OCI-LY7 (cell line): ENCODE measurements at regions of chr11 and their contacts with region 1.

Region 1: DNA sequence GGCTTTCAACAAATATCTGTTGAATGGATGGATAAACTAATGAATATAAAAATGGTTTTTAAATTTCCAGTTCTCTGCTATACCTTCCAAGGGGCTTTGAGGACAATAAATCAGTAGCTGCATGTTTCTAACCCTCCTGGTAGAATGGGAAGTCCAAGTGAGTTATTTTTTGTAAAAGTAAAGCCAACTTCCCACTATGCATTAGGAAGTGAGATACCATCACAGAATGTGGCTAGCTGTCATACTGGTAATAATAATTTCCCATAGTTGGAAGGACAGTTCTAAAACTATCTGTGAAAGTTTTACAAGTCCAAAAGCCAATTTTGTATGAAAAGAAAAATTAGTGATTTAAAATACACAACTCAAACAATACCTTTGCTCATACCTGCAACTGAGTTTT is 50.0 kb downstream of the TMEM123 start:
- DNase-seq: no peak
- H3K4me3 ChIP-seq: no peak overlapping the region
- H3K27ac ChIP-seq: peak overlapping the region; percentile 1
- H3K4me1 ChIP-seq: peaks cover 24% of the 10 kb centered on the region
- CTCF ChIP-seq: no peak

Region 2: DNA sequence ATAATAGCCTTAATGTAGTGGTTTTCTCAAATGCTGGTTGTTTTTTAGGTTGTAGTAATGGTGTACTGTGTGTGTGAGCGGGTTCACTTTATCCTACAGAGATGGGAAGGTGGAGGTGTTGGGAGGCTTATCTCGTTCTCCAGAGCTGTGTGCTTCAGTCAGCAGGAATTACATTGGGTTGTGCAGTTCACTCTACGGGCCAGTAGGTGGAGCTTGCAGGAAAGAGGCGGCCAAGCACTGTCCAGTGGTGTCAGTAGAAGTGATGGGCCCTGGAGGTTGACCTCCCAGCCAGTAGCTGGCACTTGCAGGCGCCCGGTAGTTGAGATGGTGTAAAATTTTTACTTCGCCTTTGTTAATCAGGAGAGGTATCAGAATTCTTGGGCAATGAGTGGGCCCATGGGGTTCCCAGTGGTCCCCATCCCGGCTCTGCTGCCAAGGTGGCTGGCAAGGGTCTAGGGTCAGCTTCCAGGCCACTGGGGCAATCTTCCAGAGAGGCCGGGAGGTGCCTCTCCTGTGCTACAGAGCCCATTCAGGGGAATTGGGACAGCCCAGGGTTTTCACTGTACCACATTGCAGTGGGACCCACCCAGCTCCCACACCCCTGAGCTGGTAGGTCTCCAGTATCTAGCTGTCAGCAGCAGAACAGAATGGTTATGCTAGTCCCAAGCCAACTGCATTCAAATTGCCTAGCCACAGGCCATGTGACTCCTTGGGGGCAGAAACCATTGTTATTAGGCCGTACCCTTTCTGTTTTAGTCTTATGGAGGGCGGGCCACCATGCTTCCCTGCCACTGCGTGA is 11.7 kb before region 1 on chr11:
- CTCF ChIA-PET with region 1: interaction called, 4 read pairs
- POLR2A ChIA-PET with region 1: interaction called, 11 read pairs
- intact Hi-C with region 1: no loop called
- DNase-seq: peak; percentile 74
- H3K4me3 ChIP-seq: no peak overlapping the region
- H3K27ac ChIP-seq: no peak overlapping the region
- H3K4me1 ChIP-seq: peaks cover 28% of the 10 kb centered on the region
- CTCF ChIP-seq: peak; percentile 95

Region 3: GRCh38 chr11:102469172-102469821 is 66.7 kb after region 1 on chr11:
- CTCF ChIA-PET with region 1: no interaction called
- POLR2A ChIA-PET with region 1: no interaction called
- intact Hi-C with region 1: no loop called
- DNase-seq: no peak
- H3K4me3 ChIP-seq: no peak overlapping the region
- H3K27ac ChIP-seq: no peak overlapping the region
- H3K4me1 ChIP-seq: peaks cover 82% of the 10 kb centered on the region
- CTCF ChIP-seq: no peak